ENCODE measurements at regions of chr3 and their contacts with region 1.

Region 1: DNA sequence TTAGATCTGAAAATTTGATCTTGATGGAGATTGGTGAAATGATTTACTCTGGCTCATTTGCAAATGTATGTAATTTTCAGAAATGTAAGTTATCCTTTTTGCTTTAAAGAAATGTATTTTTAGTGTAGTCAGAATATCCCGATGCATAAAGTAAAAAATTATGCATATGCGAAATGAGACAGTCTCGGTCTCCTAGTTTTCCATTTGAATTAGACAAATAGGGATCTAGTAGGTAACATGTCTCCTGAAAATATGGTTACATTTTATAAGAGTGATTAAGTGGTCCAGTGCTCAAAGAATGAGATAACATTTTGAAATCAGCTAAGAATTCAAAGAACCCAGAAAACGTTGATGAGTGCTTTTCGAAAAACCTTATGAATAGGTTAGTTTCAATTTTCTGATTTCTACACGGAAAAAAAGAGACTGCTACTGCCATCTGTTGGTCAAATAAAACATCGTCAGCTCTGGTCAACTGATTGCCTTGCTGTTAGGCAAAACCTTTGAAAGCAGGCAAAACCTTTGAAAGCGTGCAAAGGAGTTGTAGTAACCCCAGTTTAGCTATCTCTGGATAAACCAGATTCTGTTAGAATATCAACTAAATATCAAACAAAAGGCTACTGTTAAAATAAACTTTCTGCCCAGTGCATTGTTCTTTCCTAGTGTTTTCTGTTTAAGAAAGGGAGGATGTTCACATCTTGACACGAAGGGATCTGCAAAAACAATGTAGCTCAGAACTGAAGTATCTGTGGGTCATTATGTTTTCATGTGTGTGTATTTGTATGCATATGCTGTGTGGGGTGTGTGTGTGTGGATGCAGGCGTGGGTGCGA is 59.3 kb upstream of the CHMP2B start:
- DNase-seq: peak; percentile 40 to 56 (median 42)
- ATAC-seq: peak; percentile 70
- H3K4me3 ChIP-seq: no peak overlapping the region
- H3K27ac ChIP-seq: no peak overlapping the region
- H3K4me1 ChIP-seq: no peaks in the 10 kb centered on the region
- H3K27me3 ChIP-seq: no peaks in the 10 kb centered on the region
- CTCF ChIP-seq: peak; percentile 19 to 66 (median 51)
- POLR2A ChIP-seq: no peak

Region 2: GRCh38 chr3:86774082-86774691 is 393.7 kb before region 1 on chr3:
- intact Hi-C with region 1: loop called (anchors 10 kb)
- DNase-seq: no peak
- ATAC-seq: peak; percentile 64
- H3K4me3 ChIP-seq: no peak overlapping the region
- H3K27ac ChIP-seq: no peak overlapping the region
- H3K4me1 ChIP-seq: peaks cover 3% of the 10 kb centered on the region
- H3K27me3 ChIP-seq: no peaks in the 10 kb centered on the region
- CTCF ChIP-seq: peak; percentile 6 to 62 (median 52)
- POLR2A ChIP-seq: no peak